Motor neuron (in vitro differentiated cells): ENCODE measurements at regions of chr3 and their contacts with region 1.

Region 1: GRCh38 chr3:99172736-99173657 is 271.5 kb upstream of the DCBLD2 start:
- ATAC-seq: peak in 5 of 8 experiments; percentile 27 to 89 (median 83)
- H3K4me3 ChIP-seq: no peak overlapping the region
- H3K27ac ChIP-seq: no peak overlapping the region
- H3K4me1 ChIP-seq: peaks cover 0 to 8% of the 10 kb centered on the region in 2 donors

Region 2: DNA sequence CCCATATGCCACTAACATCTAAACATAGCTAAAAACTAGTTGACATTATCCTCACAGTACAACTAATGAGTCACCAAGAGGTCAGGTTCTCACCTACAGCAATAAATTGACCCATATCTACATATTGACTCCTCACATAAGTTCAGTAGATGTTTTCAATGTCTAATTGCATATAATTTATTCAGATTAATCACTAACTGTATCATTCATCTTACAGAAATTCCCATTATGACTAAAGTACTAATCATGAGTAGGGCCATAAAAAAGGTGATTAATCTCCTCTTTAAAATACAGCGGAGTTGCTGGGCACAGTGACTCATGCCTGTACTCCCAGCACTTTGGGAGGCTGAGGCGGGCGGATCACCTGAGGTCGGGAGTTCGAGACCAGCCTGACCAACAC is 492.3 kb before region 1 on chr3:
- in situ Hi-C with region 1: no loop called
- ATAC-seq: no peak
- H3K4me3 ChIP-seq: no peak overlapping the region
- H3K27ac ChIP-seq: no peak overlapping the region
- H3K4me1 ChIP-seq: no peaks in the 10 kb centered on the region

Region 3: DNA sequence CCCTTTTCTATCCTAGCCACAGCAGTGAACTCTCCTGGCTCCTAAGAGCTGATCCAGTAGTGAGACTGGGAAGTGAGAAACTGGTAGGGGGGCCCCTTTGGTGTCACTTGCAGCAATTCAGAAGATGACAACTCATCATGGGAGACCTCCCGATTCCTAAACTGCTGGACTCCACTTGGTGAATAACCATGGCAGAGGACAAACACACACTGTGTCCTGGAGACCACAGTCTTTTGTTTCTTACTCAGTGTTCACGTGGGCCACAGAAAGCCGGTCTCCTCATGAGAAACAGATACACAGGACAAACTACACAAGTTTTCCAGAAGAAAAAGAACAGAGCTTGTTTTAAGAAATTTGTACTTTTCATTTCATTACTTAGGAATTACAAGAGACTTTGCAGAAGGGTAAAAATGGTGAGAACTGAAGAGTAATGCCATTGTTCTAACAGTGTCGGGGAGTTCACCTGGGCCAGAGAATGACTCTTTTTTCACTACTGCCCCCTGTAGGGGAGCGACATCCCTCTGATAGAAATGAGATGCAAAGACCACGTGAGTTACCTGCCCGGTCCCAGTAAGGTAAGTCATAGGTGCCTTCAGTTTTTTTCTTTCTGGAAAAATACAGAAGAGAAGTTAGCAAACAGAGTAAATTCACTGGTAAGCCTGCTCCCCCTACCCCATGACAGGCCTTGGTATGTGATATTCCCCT is 371.8 kb before region 1 on chr3:
- in situ Hi-C with region 1: no loop called
- ATAC-seq: peak in 1 of 8 experiments; percentile 88
- H3K4me3 ChIP-seq: no peak overlapping the region
- H3K27ac ChIP-seq: no peak overlapping the region
- H3K4me1 ChIP-seq: no peaks in the 10 kb centered on the region

Region 4: GRCh38 chr3:99049164-99049563 is 123.8 kb before region 1 on chr3:
- in situ Hi-C with region 1: loop called in 1 of 9 experiments (anchors 25 kb)
- ATAC-seq: no peak
- H3K4me3 ChIP-seq: no peak overlapping the region
- H3K27ac ChIP-seq: no peak overlapping the region
- H3K4me1 ChIP-seq: no peaks in the 10 kb centered on the region

Region 5: DNA sequence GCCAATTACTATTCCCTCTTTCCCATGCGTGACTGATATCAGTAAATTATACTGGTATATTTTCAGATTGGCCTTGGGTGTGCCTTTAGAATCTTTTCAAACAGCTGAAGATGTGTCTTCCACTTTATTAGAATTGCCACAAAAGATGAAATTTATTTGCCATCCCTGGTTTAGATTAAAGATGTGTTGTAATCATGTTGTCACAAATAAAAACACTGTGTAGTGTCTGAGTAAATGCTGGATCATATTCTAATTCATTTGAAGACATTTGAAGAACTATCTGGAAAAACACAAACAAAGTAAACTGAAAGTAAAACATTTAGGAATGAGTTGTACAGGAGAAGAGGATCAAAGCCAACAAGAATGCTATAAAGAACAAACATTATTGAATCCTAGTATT is 125.7 kb after region 1 on chr3:
- in situ Hi-C with region 1: no loop called
- ATAC-seq: no peak
- H3K4me3 ChIP-seq: no peak overlapping the region
- H3K27ac ChIP-seq: no peak overlapping the region
- H3K4me1 ChIP-seq: peaks cover 5 to 6% of the 10 kb centered on the region in 2 donors

Region 6: GRCh38 chr3:99355465-99355864 is 182.5 kb after region 1 on chr3:
- in situ Hi-C with region 1: no loop called
- ATAC-seq: no peak
- H3K4me3 ChIP-seq: no peak overlapping the region
- H3K27ac ChIP-seq: no peak overlapping the region
- H3K4me1 ChIP-seq: no peaks in the 10 kb centered on the region